ENCODE measurements at regions of chr2 and their contacts with region 1.

Region 1: GRCh38 chr2:236168110-236169067 is at the start of gene GBX2:
- DNase-seq: peak in 1 of 2 donors; percentile 85
- H3K4me3 ChIP-seq: peak within 1 kb of the TSS; percentile 27 to 54 (median 38)
- H3K27ac ChIP-seq: no peak within 1 kb of the TSS
- H3K4me1 ChIP-seq: peaks cover 38 to 90% (median 67%) of the 10 kb centered on the region in 4 donors
- H3K27me3 ChIP-seq: peaks cover 69 to 100% (median 99%) of the 10 kb centered on the region in 3 donors
- CTCF ChIP-seq: no peak
- EP300 ChIP-seq: no peak
- POLR2A ChIP-seq: no peak
- total RNA-seq, gene GBX2: 0.55 TPM in 1 of 5 donors, not detected in the others

Region 2: DNA sequence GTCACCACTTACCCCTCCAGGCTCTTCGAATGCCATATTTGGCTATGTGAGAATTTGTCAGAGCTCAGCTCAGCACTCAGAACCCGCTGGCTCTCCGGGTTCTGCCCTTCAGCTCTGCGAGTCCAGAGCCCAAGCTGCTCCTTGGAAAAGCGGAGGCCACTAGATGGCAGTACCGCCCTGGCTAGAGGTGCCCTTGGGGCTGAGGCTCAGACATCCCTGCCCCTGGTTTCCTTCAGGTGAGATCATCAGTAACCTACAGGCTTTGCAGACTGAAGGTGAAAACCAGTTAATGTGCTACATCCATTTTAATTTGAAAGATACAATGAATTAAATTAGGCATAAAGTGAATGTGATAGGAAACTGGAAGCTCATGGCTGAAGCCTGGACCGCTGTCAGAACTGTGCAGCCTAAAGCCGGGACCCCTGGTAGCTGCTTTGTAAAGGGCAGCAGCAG is 388.9 kb before region 1 on chr2:
- intact Hi-C with region 1: loop called (anchors 5 kb)
- DNase-seq: peak; percentile 80 to 91
- H3K4me3 ChIP-seq: no peak overlapping the region
- H3K27ac ChIP-seq: no peak overlapping the region
- H3K4me1 ChIP-seq: no peaks in the 10 kb centered on the region
- H3K27me3 ChIP-seq: no peaks in the 10 kb centered on the region
- CTCF ChIP-seq: peak in 5 of 7 experiments; percentile 60 to 74 (median 64)
- EP300 ChIP-seq: no peak
- POLR2A ChIP-seq: no peak

Region 3: GRCh38 chr2:236073246-236073645 is 95.1 kb before region 1 on chr2:
- intact Hi-C with region 1: no loop called
- DNase-seq: no peak
- H3K4me3 ChIP-seq: no peak overlapping the region
- H3K27ac ChIP-seq: no peak overlapping the region
- H3K4me1 ChIP-seq: no peaks in the 10 kb centered on the region
- H3K27me3 ChIP-seq: no peaks in the 10 kb centered on the region
- CTCF ChIP-seq: no peak
- EP300 ChIP-seq: no peak
- POLR2A ChIP-seq: no peak

Region 4: DNA sequence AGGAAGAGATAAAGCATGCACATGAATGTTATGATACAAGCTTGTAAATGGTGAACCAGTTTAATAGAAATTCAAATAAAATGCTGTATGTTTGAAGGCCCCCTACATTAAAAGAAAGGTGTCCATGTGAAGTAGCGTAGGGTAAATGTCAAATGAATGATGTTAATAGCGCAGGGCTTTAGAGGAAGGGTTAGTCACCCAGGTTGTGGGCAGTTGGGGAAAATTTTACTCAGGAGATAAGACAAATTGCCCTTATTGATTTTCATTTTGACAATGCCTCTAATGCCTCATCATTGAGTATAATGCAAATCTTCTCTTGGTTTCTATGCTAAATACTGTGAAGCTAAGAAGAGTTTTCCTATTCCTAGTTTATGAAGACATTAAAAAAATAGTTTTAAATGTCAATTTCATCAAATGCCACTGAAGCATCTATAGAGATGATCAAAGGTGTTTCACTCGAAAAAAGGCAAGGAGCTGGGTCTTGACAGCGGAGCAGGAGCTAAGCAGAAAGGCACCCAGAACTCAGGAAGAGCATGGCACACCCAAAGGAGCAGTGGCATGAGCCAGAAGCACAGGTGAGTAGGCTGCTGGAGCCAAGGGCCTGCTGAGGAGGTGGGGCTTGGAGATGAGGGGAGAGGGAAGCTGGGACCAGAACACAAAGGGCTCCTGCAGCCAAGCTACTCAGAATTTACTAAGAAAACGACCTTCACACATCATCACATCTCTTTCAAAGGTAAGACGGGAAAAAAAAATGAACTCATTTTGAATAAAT is 271.9 kb after region 1 on chr2:
- intact Hi-C with region 1: no loop called
- DNase-seq: no peak
- H3K4me3 ChIP-seq: no peak overlapping the region
- H3K27ac ChIP-seq: no peak overlapping the region
- H3K4me1 ChIP-seq: no peaks in the 10 kb centered on the region
- H3K27me3 ChIP-seq: no peaks in the 10 kb centered on the region
- CTCF ChIP-seq: no peak
- EP300 ChIP-seq: no peak
- POLR2A ChIP-seq: no peak

Region 5: DNA sequence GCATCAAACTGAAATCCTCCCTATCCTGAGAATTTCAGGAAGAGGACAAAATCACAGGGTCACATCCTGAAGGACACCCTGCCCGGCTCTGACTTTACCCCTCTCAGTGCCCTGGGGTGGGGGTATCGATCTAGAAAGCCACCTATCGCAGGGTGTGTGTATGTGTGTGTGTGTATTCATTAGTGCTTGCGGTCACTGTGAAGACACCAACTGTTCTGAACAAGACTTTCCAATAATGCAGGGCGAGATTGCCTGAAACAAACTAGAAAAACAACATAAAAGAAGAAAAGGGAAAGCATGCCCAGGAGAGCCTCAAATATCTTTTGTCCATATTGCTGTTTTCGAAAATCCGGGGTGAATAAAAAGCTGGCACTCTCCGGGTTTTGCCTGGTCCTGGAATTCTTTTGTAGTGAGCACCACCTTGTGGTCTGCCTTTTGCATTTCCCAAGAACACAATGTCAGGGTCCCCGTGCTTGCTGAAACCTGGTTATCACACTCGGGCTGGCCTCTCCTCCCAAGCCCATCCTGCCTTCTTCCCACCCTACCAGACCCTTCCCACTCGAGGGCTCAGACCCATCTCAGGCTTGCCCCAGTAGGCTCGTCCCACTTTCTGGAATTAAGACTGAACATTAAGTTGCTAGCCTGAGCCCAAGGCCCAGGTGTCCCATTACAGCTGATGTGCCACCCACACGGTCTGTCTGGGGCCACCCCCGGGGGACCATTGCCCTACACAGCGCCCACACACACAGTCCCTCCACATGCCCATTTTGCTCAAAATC is 892.3 kb after region 1 on chr2:
- intact Hi-C with region 1: no loop called
- DNase-seq: peak; percentile 54 to 88
- H3K4me3 ChIP-seq: peak overlapping the region in 1 of 4 donors; percentile 12
- H3K27ac ChIP-seq: no peak overlapping the region
- H3K4me1 ChIP-seq: peaks cover 6 to 24% (median 18%) of the 10 kb centered on the region in 4 donors
- H3K27me3 ChIP-seq: no peaks in the 10 kb centered on the region
- CTCF ChIP-seq: peak in 5 of 7 experiments; percentile 32 to 75 (median 54)
- EP300 ChIP-seq: no peak
- POLR2A ChIP-seq: no peak